ENCODE measurements at regions of chr20 and their contacts with region 1.

Region 1: GRCh38 chr20:63864847-63865640 is at the start of gene TPD52L2:
- DNase-seq: peak; percentile 90 to 98 (median 96)
- ATAC-seq: peak; percentile 88 to 90
- H3K4me3 Mint-ChIP-seq: peak within 1 kb of the TSS; percentile 87 to 99 (median 96)
- H3K27ac Mint-ChIP-seq: peak within 1 kb of the TSS; percentile 93 to 99 (median 95)
- H3K4me1 Mint-ChIP-seq: peaks cover 18 to 40% (median 37%) of the 10 kb centered on the region in 4 donors
- H3K27me3 Mint-ChIP-seq: no peaks in the 10 kb centered on the region
- polyA plus RNA-seq, gene TPD52L2: 56.4 to 79.0 (median 68.3) TPM

Region 2: DNA sequence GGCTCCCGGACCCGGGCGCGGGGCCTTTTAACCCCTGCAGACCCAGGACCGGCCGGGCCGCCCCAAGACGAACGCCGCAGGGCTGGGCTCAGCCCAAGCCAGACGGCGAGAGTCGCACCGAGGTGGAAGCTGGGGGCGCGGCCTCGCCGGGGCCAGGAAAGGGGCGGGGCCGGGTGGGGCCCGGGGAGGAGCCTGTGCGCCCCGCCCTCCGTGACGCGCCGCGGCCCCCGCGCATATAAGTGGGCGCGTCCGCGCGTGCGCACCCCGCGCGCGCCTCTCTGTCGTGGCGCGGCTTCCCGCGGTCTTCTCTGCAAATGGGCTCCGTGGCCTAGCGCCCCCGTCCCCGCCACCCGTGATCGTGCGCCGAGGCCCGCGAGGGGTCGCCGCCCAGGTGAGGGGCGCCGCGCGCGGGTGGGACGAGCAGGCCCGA is 344.5 kb before region 1 on chr20 and contains the start of gene PPDPF:
- POLR2A ChIA-PET with region 1: interaction called, 11 read pairs
- DNase-seq: peak; percentile 74 to 94 (median 86)
- ATAC-seq: peak; percentile 78
- H3K4me3 Mint-ChIP-seq: peak within 1 kb of the TSS; percentile 74 to 89 (median 82)
- H3K27ac Mint-ChIP-seq: peak within 1 kb of the TSS; percentile 44 to 92 (median 84)
- H3K4me1 Mint-ChIP-seq: peaks cover 12 to 24% (median 14%) of the 10 kb centered on the region in 4 donors
- H3K27me3 Mint-ChIP-seq: peaks cover 0 to 2% (median 0%) of the 10 kb centered on the region in 5 donors
- polyA plus RNA-seq, gene PPDPF: 47.4 to 93.1 (median 78.1) TPM

Region 3: DNA sequence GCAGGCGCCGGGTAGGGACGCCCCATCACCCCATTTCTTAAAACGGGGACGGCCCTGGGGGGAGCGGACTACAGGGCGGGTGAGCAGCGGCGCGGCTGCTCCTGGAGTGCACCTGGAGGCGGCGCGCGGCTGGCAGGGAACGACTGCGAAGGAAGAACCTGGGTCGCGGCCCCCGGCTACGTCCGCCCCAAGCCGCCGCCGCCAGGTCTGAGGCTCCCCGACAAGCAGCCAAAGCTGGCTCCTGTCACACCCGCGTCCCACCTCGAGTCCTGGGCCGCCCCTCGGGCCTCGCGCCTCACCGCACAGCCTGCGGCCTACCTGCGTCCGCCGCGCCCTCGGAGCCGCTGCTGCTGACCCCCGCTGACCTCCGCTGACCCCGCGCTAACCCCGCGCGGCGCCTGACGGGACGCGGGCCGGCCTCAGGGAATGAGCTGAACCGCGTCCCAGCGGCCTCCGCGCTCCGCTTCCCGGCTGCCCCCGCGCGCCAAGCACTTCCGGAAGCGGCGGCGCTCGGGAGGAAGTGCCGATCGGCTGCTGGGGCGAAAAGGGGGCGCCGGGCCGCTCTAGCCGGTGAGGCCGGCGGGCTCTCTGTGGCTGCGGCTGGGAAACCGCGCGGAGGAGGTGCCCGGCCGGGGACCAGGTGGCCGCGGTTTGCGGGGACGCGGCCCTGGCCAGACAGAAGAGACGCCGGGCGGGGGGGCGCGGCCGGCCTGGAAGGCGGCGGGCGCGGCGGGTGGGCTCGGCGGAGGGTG is 157.3 kb before region 1 on chr20 and contains the starts of genes ARFRP1 and ZGPAT:
- POLR2A ChIA-PET with region 1: interaction called, 23 read pairs
- DNase-seq: peak; percentile 70 to 88 (median 84)
- ATAC-seq: peak; percentile 81 to 83
- H3K4me3 Mint-ChIP-seq: peak within 1 kb of the TSS; percentile 84 to 95 (median 90)
- H3K27ac Mint-ChIP-seq: peak within 1 kb of the TSS; percentile 88 to 95 (median 92)
- H3K4me1 Mint-ChIP-seq: peaks cover 27 to 60% (median 54%) of the 10 kb centered on the region in 4 donors
- H3K27me3 Mint-ChIP-seq: no peaks in the 10 kb centered on the region
- polyA plus RNA-seq, gene ARFRP1: 60.1 to 92.1 (median 80.9) TPM
- polyA plus RNA-seq, gene ZGPAT: 42.3 to 73.8 (median 47.1) TPM

Region 4: GRCh38 chr20:63782051-63782471 is 83.0 kb before region 1 on chr20:
- POLR2A ChIA-PET with region 1: interaction called, 10 read pairs
- DNase-seq: peak; percentile 21 to 88 (median 70)
- ATAC-seq: peak; percentile 94 to 97
- H3K4me3 Mint-ChIP-seq: peak overlapping the region; percentile 22 to 80 (median 65)
- H3K27ac Mint-ChIP-seq: peak overlapping the region; percentile 44 to 93 (median 84)
- H3K4me1 Mint-ChIP-seq: peaks cover 8 to 28% (median 17%) of the 10 kb centered on the region in 4 donors
- H3K27me3 Mint-ChIP-seq: no peaks in the 10 kb centered on the region

Region 5: DNA sequence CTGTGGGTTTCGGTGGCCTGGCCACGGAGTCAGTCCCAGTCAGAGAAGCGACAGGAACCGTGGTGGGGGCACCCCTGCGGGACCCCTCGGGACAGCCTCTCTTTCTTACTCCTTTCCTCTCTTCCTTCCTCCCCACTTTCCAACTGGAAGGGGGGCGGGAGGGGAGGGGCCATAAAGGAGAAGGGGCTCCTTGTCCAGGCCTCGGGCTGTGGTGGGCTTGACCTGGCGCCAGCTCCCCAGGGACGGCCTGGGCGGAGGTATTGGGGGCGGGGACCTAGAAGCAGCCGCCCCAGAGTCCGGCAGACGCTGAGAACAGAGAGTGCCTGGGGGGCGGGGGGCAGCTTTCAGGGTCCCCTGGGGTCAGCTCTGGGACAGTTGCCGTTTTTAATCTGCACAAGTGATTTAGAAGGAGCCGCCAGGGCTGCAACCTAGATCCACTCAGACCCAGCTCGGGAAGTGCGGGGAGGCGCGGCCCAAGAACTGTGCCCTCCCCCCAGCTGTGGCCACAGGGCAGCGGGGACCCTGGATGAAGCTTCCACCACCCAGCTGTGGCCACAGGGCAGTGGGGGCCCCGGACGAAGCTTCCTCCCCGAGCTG is 10.2 kb before region 1 on chr20:
- POLR2A ChIA-PET with region 1: interaction called, 10 read pairs
- DNase-seq: no peak
- ATAC-seq: no peak
- H3K4me3 Mint-ChIP-seq: peak overlapping the region in 2 of 10 donors; percentile 31 to 45
- H3K27ac Mint-ChIP-seq: no peak overlapping the region
- H3K4me1 Mint-ChIP-seq: peaks cover 14 to 41% (median 38%) of the 10 kb centered on the region in 4 donors
- H3K27me3 Mint-ChIP-seq: peaks cover 1 to 14% (median 8%) of the 10 kb centered on the region in 5 donors

Region 6: GRCh38 chr20:63896264-63897105 is 31.4 kb after region 1 on chr20:
- POLR2A ChIA-PET with region 1: interaction called, 12 read pairs
- DNase-seq: peak in 3 of 10 donors; percentile 16 to 26 (median 18)
- ATAC-seq: peak; percentile 5 to 12
- H3K4me3 Mint-ChIP-seq: peak overlapping the region; percentile 86 to 98 (median 92)
- H3K27ac Mint-ChIP-seq: peak overlapping the region; percentile 89 to 99 (median 96)
- H3K4me1 Mint-ChIP-seq: peaks cover 31 to 64% (median 52%) of the 10 kb centered on the region in 4 donors
- H3K27me3 Mint-ChIP-seq: no peaks in the 10 kb centered on the region

Region 7: GRCh38 chr20:63980806-63981728 is 116.0 kb after region 1 on chr20 and contains the start of gene PRPF6:
- POLR2A ChIA-PET with region 1: interaction called, 18 read pairs
- DNase-seq: peak; percentile 89 to 97 (median 94)
- ATAC-seq: peak; percentile 56 to 65
- H3K4me3 Mint-ChIP-seq: peak within 1 kb of the TSS; percentile 84 to 98 (median 96)
- H3K27ac Mint-ChIP-seq: peak within 1 kb of the TSS; percentile 94 to 98 (median 96)
- H3K4me1 Mint-ChIP-seq: peaks cover 44 to 69% (median 65%) of the 10 kb centered on the region in 4 donors
- H3K27me3 Mint-ChIP-seq: no peaks in the 10 kb centered on the region
- polyA plus RNA-seq, gene PRPF6: 67.2 to 110 (median 85.9) TPM

Region 8: GRCh38 chr20:64038565-64039292 is 173.7 kb after region 1 on chr20:
- POLR2A ChIA-PET with region 1: no interaction called
- DNase-seq: peak; percentile 65 to 82 (median 76)
- ATAC-seq: peak; percentile 54 to 79
- H3K4me3 Mint-ChIP-seq: peak overlapping the region; percentile 45 to 90 (median 79)
- H3K27ac Mint-ChIP-seq: peak overlapping the region in 2 of 10 donors; percentile 83 to 87
- H3K4me1 Mint-ChIP-seq: peaks cover 33 to 65% (median 53%) of the 10 kb centered on the region in 4 donors
- H3K27me3 Mint-ChIP-seq: peaks cover 0 to 1% (median 0%) of the 10 kb centered on the region in 5 donors